ENCODE measurements at regions of chr16 and their contacts with region 1.

Region 1: GRCh38 chr16:2883027-2883851 is at the start of gene FLYWCH2:
- DNase-seq: peak; percentile 99
- ATAC-seq: peak; percentile 84
- H3K4me3 Mint-ChIP-seq: peak within 1 kb of the TSS; percentile 85
- H3K27ac Mint-ChIP-seq: peak within 1 kb of the TSS; percentile 92
- H3K4me1 Mint-ChIP-seq: peaks cover 10% of the 10 kb centered on the region
- H3K27me3 Mint-ChIP-seq: no peaks in the 10 kb centered on the region
- total RNA-seq, gene FLYWCH2: 16.8 to 17.3 TPM

Region 2: GRCh38 chr16:2673066-2673999 is 209.9 kb before region 1 on chr16:
- CTCF ChIA-PET with region 1: no interaction called
- POLR2A ChIA-PET with region 1: no interaction called
- intact Hi-C with region 1: loop called in 1 of 2 experiments (anchors 2 kb)
- DNase-seq: peak; percentile 98
- ATAC-seq: peak; percentile 97
- H3K4me3 Mint-ChIP-seq: peak overlapping the region; percentile 73
- H3K27ac Mint-ChIP-seq: peak overlapping the region; percentile 47
- H3K4me1 Mint-ChIP-seq: peaks cover 28% of the 10 kb centered on the region
- H3K27me3 Mint-ChIP-seq: no peaks in the 10 kb centered on the region

Region 3: GRCh38 chr16:2682209-2683021 is 200.8 kb before region 1 on chr16 and contains the start of gene KCTD5:
- CTCF ChIA-PET with region 1: no interaction called
- POLR2A ChIA-PET with region 1: no interaction called
- intact Hi-C with region 1: loop called in 1 of 2 experiments (anchors 1 kb)
- DNase-seq: peak; percentile 98
- ATAC-seq: peak; percentile 92
- H3K4me3 Mint-ChIP-seq: peak within 1 kb of the TSS; percentile 100
- H3K27ac Mint-ChIP-seq: peak within 1 kb of the TSS; percentile 98
- H3K4me1 Mint-ChIP-seq: peaks cover 28% of the 10 kb centered on the region
- H3K27me3 Mint-ChIP-seq: no peaks in the 10 kb centered on the region
- total RNA-seq, gene KCTD5: 24.0 to 26.2 TPM

Region 4: DNA sequence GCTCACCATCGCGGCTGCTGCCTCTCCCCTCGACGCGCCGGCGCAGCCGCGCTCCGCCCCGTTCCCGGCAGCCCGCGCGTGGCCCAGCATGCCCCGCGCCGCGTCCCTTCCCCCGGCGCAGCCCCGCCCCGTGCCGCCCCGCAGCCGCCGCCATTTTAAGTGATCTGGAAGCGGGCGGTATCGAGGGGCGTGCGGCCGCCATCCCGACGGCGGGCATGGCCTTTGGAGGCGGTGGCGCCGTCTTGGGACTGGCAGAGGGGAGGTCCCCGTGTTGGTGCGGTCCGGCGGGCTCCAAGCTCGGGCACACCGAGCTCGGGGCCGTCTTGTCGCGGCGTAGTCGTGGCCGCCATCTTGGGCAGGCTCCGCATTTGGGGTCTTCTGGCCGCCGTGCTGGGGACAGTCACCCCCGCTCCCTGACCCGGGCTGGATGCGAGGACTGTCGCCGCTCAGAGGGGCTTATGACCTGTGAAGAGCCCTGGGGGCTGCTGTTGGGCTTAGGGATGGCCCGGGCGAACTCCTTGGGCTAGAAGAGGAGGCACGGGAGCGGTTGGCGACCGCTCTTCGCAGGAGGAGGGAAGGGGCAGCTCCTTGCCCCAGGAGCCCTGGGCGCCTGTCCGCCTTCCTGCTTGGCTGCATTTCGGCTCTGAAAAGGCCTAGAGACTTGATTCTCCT is 105.9 kb before region 1 on chr16 and contains the start of gene ELOB:
- CTCF ChIA-PET with region 1: no interaction called
- POLR2A ChIA-PET with region 1: interaction called, 4 read pairs
- intact Hi-C with region 1: loop called in 1 of 2 experiments (anchors 1 kb)
- DNase-seq: peak; percentile 95
- ATAC-seq: peak; percentile 94
- H3K4me3 Mint-ChIP-seq: peak within 1 kb of the TSS; percentile 95
- H3K27ac Mint-ChIP-seq: peak within 1 kb of the TSS; percentile 96
- H3K4me1 Mint-ChIP-seq: peaks cover 26% of the 10 kb centered on the region
- H3K27me3 Mint-ChIP-seq: no peaks in the 10 kb centered on the region
- total RNA-seq, gene ELOB: 268 to 269 TPM

Region 5: GRCh38 chr16:2926650-2927646 is 43.7 kb after region 1 on chr16:
- CTCF ChIA-PET with region 1: interaction called, 8 read pairs
- POLR2A ChIA-PET with region 1: interaction called, 5 read pairs
- intact Hi-C with region 1: loop called in 1 of 2 experiments (anchors 2 kb)
- DNase-seq: peak; percentile 93
- ATAC-seq: peak; percentile 99
- H3K4me3 Mint-ChIP-seq: no peak overlapping the region
- H3K27ac Mint-ChIP-seq: no peak overlapping the region
- H3K4me1 Mint-ChIP-seq: peaks cover 11% of the 10 kb centered on the region
- H3K27me3 Mint-ChIP-seq: no peaks in the 10 kb centered on the region

Region 6: DNA sequence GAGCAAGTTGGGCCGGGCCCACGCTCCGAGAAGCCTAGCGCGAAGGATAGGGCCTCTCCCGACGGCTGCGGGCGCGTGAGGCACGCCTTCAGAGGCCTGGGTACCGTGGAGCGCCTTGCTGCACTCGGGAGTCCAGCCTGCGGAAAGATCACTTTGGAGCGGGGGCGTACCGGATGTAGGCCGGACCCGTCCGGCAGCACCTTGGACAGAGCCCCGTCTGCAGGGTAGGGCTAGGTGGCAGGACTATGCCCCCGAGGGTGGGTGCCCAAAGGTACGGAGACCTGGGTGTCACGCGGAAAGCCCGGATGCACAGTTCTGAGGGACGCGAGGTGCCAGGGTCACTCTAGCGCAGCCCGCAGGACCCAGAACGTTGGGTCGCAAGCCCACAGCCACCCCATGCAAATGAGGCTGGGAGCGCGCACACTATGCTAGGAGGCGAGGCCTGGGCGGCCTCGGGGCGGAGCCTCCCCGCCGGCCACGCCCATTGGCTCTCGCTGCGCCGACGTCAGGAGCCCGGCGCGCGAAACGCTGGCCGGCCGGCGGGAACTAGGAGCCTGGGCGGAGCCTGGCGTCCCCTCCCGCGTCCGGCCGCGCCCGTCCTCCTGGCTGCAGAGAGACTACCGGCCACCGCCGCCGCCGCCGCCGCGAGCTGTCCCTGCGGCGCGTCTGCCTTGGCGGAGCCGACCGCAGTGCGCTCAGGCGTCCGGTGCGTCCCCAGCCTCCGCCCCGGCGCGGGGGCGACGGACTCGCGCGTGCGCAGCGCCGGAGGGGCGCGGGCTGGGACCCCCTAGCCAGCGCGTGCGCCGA is 85.7 kb after region 1 on chr16 and contains the start of gene PAQR4:
- CTCF ChIA-PET with region 1: no interaction called
- POLR2A ChIA-PET with region 1: no interaction called
- intact Hi-C with region 1: loop called in 1 of 2 experiments (anchors 1 kb)
- DNase-seq: peak; percentile 90
- ATAC-seq: peak; percentile 75
- H3K4me3 Mint-ChIP-seq: peak within 1 kb of the TSS; percentile 72
- H3K27ac Mint-ChIP-seq: peak within 1 kb of the TSS; percentile 25
- H3K4me1 Mint-ChIP-seq: peaks cover 31% of the 10 kb centered on the region
- H3K27me3 Mint-ChIP-seq: peaks cover 21% of the 10 kb centered on the region
- total RNA-seq, gene PAQR4: 28.7 to 31.2 TPM

Measured in activated CD4-positive, alpha-beta T cell treated with anti-CD3 and anti-CD28 coated beads for 36 hours (primary cell).